ENCODE measurements at regions of chr2 and their contacts with region 1.

Region 1: GRCh38 chr2:48946449-48947048 is 191.0 kb upstream of the LHCGR start:
- DNase-seq: peak; percentile 24 to 49
- H3K4me3 ChIP-seq: no peak overlapping the region
- H3K27ac ChIP-seq: no peak overlapping the region
- H3K4me1 ChIP-seq: no peaks in the 10 kb centered on the region
- H3K27me3 ChIP-seq: peaks cover 36% of the 10 kb centered on the region
- CTCF ChIP-seq: peak; percentile 99

Region 2: GRCh38 chr2:49490710-49491109 is 544.2 kb after region 1 on chr2:
- CTCF ChIA-PET with region 1: no interaction called
- POLR2A ChIA-PET with region 1: no interaction called
- intact Hi-C with region 1: loop called (anchors 5 kb)
- DNase-seq: peak in 1 of 2 experiments; percentile 20
- H3K4me3 ChIP-seq: no peak overlapping the region
- H3K27ac ChIP-seq: no peak overlapping the region
- H3K4me1 ChIP-seq: no peaks in the 10 kb centered on the region
- H3K27me3 ChIP-seq: no peaks in the 10 kb centered on the region
- CTCF ChIP-seq: peak; percentile 83

Region 3: DNA sequence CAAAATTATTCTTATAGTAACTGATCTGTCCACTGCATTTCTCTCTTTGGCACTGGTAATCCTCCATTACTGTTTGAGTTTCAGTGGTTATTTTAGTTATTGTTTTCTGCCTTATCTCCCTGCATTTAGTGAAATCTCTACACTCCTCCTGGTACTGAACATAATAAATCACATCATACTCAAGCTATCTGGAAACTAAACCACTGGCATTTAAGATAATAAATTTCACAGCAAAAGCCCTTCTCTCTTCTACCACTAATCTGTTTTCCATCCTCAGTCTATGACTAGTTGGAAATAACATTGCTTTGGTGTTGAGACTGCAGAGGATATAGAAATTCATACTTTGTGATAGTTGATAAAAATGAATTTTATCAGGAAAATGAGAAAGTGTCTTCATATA is 607.1 kb after region 1 on chr2:
- CTCF ChIA-PET with region 1: no interaction called
- POLR2A ChIA-PET with region 1: no interaction called
- intact Hi-C with region 1: no loop called
- DNase-seq: no peak
- H3K4me3 ChIP-seq: no peak overlapping the region
- H3K27ac ChIP-seq: no peak overlapping the region
- H3K4me1 ChIP-seq: no peaks in the 10 kb centered on the region
- H3K27me3 ChIP-seq: no peaks in the 10 kb centered on the region
- CTCF ChIP-seq: no peak

Region 4: DNA sequence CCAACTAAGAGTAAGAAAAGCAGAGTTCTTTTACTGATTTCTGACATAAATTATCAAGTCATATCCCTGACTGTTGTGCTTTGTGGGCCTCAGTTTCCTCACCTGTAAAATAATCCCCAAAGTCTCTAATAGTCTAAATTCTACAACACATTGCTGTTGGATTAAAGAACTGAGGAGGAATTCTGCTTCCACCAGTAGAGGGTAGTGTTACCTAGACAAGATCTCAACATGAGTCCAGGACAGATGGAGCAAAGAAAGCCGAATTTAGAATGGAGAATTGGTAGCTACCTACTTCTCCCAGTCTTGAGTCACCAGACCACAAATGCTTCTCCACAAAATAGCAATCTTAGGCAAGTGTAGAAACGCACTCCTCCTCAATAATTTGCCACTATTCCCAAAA is 670.3 kb after region 1 on chr2:
- CTCF ChIA-PET with region 1: no interaction called
- POLR2A ChIA-PET with region 1: no interaction called
- intact Hi-C with region 1: loop called (anchors 10 kb)
- DNase-seq: no peak
- H3K4me3 ChIP-seq: no peak overlapping the region
- H3K27ac ChIP-seq: no peak overlapping the region
- H3K4me1 ChIP-seq: no peaks in the 10 kb centered on the region
- H3K27me3 ChIP-seq: peaks cover 6% of the 10 kb centered on the region; the same call in 1 of the 2 replicates
- CTCF ChIP-seq: peak; percentile 68

Region 5: GRCh38 chr2:50143822-50144575 is 1197.5 kb after region 1 on chr2:
- CTCF ChIA-PET with region 1: no interaction called
- POLR2A ChIA-PET with region 1: no interaction called
- intact Hi-C with region 1: no loop called
- DNase-seq: peak; percentile 4 to 37
- H3K4me3 ChIP-seq: peak overlapping the region; percentile 54
- H3K27ac ChIP-seq: no peak overlapping the region
- H3K4me1 ChIP-seq: no peaks in the 10 kb centered on the region
- H3K27me3 ChIP-seq: no peaks in the 10 kb centered on the region
- CTCF ChIP-seq: peak; percentile 83

Region 6: GRCh38 chr2:50401772-50402653 is 1455.5 kb after region 1 on chr2:
- CTCF ChIA-PET with region 1: no interaction called
- POLR2A ChIA-PET with region 1: no interaction called
- intact Hi-C with region 1: loop called (anchors 5 kb)
- DNase-seq: peak in 1 of 2 experiments; percentile 20
- H3K4me3 ChIP-seq: no peak overlapping the region
- H3K27ac ChIP-seq: no peak overlapping the region
- H3K4me1 ChIP-seq: no peaks in the 10 kb centered on the region
- H3K27me3 ChIP-seq: no peaks in the 10 kb centered on the region
- CTCF ChIP-seq: peak; percentile 92

Region 7: GRCh38 chr2:50492477-50492851 is 1545.9 kb after region 1 on chr2:
- CTCF ChIA-PET with region 1: no interaction called
- POLR2A ChIA-PET with region 1: no interaction called
- intact Hi-C with region 1: loop called (anchors 2 kb)
- DNase-seq: no peak
- H3K4me3 ChIP-seq: no peak overlapping the region
- H3K27ac ChIP-seq: no peak overlapping the region
- H3K4me1 ChIP-seq: no peaks in the 10 kb centered on the region
- H3K27me3 ChIP-seq: 0 out of 2 replicates have a peak, but pooled peaks cover 5% of the 10 kb centered on the region
- CTCF ChIP-seq: peak; percentile 85